PC-3 (cell line): ENCODE measurements at regions of chr13 and their contacts with region 1.

Region 1: GRCh38 chr13:34722922-34723321 is 219.1 kb upstream of the NBEA start:
- DNase-seq: no peak
- ATAC-seq: no peak; the same call in 1 of the 2 replicates
- H3K4me3 ChIP-seq: no peak overlapping the region
- H3K27ac ChIP-seq: peak overlapping the region; percentile 57
- H3K4me1 ChIP-seq: peaks cover 36% of the 10 kb centered on the region
- H3K27me3 ChIP-seq: no peaks in the 10 kb centered on the region
- CTCF ChIP-seq: no peak

Region 2: GRCh38 chr13:34469201-34470144 is 253.4 kb before region 1 on chr13:
- CTCF ChIA-PET with region 1: no interaction called
- POLR2A ChIA-PET with region 1: no interaction called
- intact Hi-C with region 1: loop called (anchors 1 kb)
- DNase-seq: peak; percentile 92
- ATAC-seq: peak; percentile 89
- H3K4me3 ChIP-seq: no peak overlapping the region
- H3K27ac ChIP-seq: peak overlapping the region; percentile 97
- H3K4me1 ChIP-seq: peaks cover 52% of the 10 kb centered on the region
- H3K27me3 ChIP-seq: no peaks in the 10 kb centered on the region
- CTCF ChIP-seq: no peak

Region 3: GRCh38 chr13:34762312-34762711 is 39.4 kb after region 1 on chr13:
- CTCF ChIA-PET with region 1: no interaction called
- POLR2A ChIA-PET with region 1: no interaction called
- intact Hi-C with region 1: no loop called
- DNase-seq: no peak
- ATAC-seq: no peak
- H3K4me3 ChIP-seq: no peak overlapping the region
- H3K27ac ChIP-seq: no peak overlapping the region
- H3K4me1 ChIP-seq: peaks cover 16% of the 10 kb centered on the region
- H3K27me3 ChIP-seq: no peaks in the 10 kb centered on the region
- CTCF ChIP-seq: no peak

Region 4: DNA sequence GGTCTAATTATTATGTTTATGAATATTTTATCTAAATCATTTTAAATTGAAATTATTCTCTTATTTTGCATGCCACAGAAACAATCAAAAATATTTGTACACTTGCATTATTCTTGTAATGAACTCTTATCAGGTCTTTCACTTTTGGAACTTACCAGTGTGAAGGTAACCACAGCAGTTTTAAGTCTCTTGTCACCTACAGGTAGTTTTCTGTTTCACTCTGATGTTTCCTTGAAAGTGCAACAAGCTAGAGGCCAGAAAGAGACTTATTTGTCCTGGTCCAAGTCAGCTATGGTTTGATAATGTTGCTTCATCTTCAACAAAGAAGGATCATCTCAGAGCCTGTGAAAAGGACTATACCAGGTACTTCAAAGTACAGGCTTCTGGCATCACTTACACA is 85.7 kb after region 1 on chr13:
- CTCF ChIA-PET with region 1: no interaction called
- POLR2A ChIA-PET with region 1: no interaction called
- intact Hi-C with region 1: no loop called
- DNase-seq: no peak
- ATAC-seq: no peak
- H3K4me3 ChIP-seq: no peak overlapping the region
- H3K27ac ChIP-seq: no peak overlapping the region
- H3K4me1 ChIP-seq: peaks cover 14% of the 10 kb centered on the region
- H3K27me3 ChIP-seq: no peaks in the 10 kb centered on the region
- CTCF ChIP-seq: no peak

Region 5: DNA sequence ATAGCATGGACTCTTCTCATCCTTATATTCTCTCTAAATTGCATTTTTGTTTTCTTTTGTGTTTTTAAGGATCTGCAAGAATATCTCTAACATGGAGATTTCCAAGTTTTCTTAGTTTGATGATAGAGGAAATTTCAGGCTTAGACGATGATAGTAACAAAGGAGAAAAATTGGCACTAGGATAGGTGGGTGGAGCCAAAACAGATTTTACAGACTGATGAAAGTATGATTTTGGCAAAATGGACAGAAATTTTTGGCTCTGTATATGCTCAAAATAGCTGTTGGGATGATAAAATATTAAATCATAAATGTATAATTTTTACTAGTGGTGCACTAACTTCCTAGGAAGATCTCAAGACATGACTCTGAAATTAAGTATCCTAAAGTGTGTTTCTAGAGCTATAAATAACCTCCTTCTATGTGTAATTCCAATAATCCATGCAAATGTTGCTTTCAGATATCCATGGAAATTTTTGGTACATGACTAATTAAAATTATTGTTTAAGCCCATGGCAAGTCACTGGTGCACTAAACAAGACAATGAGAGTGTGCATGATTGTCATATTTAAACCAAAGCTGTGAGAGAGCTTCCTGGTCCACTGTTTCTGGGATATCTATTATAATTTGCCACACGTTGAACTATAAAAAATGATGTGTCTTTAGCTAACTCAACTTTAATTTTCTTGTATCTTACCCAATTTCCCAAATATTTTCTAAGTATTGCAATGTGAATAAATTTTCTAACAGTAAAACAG is 163.4 kb after region 1 on chr13:
- CTCF ChIA-PET with region 1: no interaction called
- POLR2A ChIA-PET with region 1: no interaction called
- intact Hi-C with region 1: loop called (anchors 1 kb)
- DNase-seq: peak; percentile 28
- ATAC-seq: peak; percentile 57
- H3K4me3 ChIP-seq: no peak overlapping the region
- H3K27ac ChIP-seq: peak overlapping the region; percentile 71
- H3K4me1 ChIP-seq: peaks cover 18% of the 10 kb centered on the region
- H3K27me3 ChIP-seq: no peaks in the 10 kb centered on the region
- CTCF ChIP-seq: no peak

Region 6: GRCh38 chr13:34993470-34993869 is 270.5 kb after region 1 on chr13:
- CTCF ChIA-PET with region 1: interaction called, 3 read pairs
- POLR2A ChIA-PET with region 1: no interaction called
- intact Hi-C with region 1: loop called (anchors 5 kb)
- DNase-seq: peak; percentile 61
- ATAC-seq: peak; percentile 92
- H3K4me3 ChIP-seq: no peak overlapping the region
- H3K27ac ChIP-seq: no peak overlapping the region
- H3K4me1 ChIP-seq: 0 out of 2 replicates have a peak, but pooled peaks cover 4% of the 10 kb centered on the region
- H3K27me3 ChIP-seq: no peaks in the 10 kb centered on the region
- CTCF ChIP-seq: peak; percentile 50

Region 7: DNA sequence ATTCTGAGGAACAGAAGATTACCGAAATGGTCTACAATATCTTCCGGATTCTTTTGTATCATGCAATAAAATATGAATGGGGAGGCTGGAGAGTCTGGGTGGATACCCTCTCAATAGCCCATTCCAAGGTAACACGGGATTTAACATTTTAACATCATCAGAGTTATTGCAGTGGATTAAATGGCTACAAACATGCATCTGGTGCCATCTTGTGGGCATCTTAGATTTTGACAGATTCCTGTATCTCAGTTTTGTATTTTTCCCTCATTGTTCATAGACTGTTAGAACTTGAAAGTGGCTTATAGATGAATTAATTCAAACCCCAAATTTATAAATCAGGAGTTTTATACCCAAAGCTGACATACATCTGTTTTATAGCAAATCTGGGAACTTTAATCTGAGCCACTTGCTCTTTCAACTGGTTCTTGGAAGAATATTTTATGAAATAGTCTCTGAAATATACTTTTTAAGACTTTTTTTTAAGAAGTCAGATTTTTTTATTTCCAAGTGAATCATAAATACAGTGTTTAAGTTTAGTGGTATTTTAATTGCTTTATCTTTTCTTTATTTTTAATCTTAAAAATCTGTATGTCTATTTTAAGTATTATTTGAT is 434.3 kb after region 1 on chr13:
- CTCF ChIA-PET with region 1: no interaction called
- POLR2A ChIA-PET with region 1: no interaction called
- intact Hi-C with region 1: loop called (anchors 5 kb)
- DNase-seq: peak; percentile 73
- ATAC-seq: peak; percentile 43; the same call in 1 of the 2 replicates
- H3K4me3 ChIP-seq: no peak overlapping the region
- H3K27ac ChIP-seq: no peak overlapping the region
- H3K4me1 ChIP-seq: no peaks in the 10 kb centered on the region
- H3K27me3 ChIP-seq: no peaks in the 10 kb centered on the region
- CTCF ChIP-seq: peak; percentile 79

Region 8: GRCh38 chr13:35279500-35279899 is 556.6 kb after region 1 on chr13:
- CTCF ChIA-PET with region 1: no interaction called
- POLR2A ChIA-PET with region 1: no interaction called
- intact Hi-C with region 1: no loop called
- DNase-seq: no peak
- ATAC-seq: no peak
- H3K4me3 ChIP-seq: no peak overlapping the region
- H3K27ac ChIP-seq: no peak overlapping the region
- H3K4me1 ChIP-seq: no peaks in the 10 kb centered on the region
- H3K27me3 ChIP-seq: no peaks in the 10 kb centered on the region
- CTCF ChIP-seq: no peak